ENCODE measurements at regions of chr17 and their contacts with region 1.

Region 1: GRCh38 chr17:56581635-56582627 is 11.6 kb upstream of the NOG start:
- DNase-seq: no peak
- ATAC-seq: no peak

Region 2: GRCh38 chr17:56521104-56521777 is 60.7 kb before region 1 on chr17:
- intact Hi-C with region 1: loop called (anchors 10 kb)
- DNase-seq: no peak
- ATAC-seq: no peak

Measured in Right ventricle myocardium inferior (tissue), 1 donor.